MCF 10A (cell line): ENCODE measurements at regions of chr18 and their contacts with region 1.

Region 1: GRCh38 chr18:62982600-62983251 is 267.4 kb downstream of the PHLPP1 start:
- DNase-seq: peak; percentile 71
- H3K4me3 Mint-ChIP-seq: no peak overlapping the region
- H3K27ac Mint-ChIP-seq: no peak overlapping the region
- H3K4me1 Mint-ChIP-seq: peaks cover 6% of the 10 kb centered on the region
- H3K27me3 Mint-ChIP-seq: no peaks in the 10 kb centered on the region
- CTCF ChIP-seq: peak; percentile 73

Region 2: DNA sequence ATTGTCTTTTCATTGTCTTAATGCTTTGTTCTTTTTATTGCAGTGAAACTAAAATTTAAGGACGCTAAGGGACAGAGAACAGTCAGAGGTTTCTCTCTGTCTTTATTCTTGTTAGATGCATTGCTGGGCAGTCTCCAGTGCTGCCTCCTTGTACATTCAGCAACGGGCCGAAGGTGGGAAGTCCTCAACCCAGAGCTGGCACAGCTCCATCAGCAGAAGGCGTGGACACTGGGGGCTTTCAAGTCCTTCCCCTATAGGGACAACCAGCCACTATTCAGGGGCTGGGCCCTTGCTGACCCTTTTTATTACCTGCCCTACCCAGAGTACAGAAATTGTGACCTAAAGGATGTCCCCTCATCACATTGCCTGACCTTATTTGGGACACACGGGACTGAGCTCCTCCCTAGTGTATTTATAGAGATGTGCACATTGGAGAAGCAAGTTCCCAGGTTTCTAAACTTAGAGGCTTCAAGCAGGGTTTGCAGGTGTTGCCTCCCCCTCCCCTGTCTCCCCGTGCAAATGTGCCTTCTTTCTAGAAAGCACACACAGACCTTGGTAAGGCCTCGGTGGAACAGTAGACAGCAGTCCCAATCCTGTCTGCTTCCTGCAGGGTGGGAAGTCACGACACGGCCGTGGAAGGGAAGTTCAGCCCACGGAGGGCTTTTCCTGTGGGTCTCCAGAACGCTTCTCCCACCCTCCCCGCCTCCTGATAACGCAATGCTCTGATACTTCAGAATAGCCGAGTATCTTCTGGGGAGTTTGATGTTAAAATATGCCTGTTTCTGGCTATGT is 391.7 kb before region 1 on chr18:
- CTCF ChIA-PET with region 1: interaction called, 72 read pairs
- POLR2A ChIA-PET with region 1: interaction called, 4 read pairs
- intact Hi-C with region 1: loop called (anchors 1 kb)
- DNase-seq: no peak
- H3K4me3 Mint-ChIP-seq: no peak overlapping the region
- H3K27ac Mint-ChIP-seq: no peak overlapping the region
- H3K4me1 Mint-ChIP-seq: no peaks in the 10 kb centered on the region
- H3K27me3 Mint-ChIP-seq: no peaks in the 10 kb centered on the region
- CTCF ChIP-seq: no peak

Region 3: GRCh38 chr18:62992967-62993366 is 10.2 kb after region 1 on chr18:
- CTCF ChIA-PET with region 1: interaction called, 14 read pairs
- POLR2A ChIA-PET with region 1: no interaction called
- intact Hi-C with region 1: no loop called
- DNase-seq: no peak
- H3K4me3 Mint-ChIP-seq: no peak overlapping the region
- H3K27ac Mint-ChIP-seq: no peak overlapping the region
- H3K4me1 Mint-ChIP-seq: peaks cover 6% of the 10 kb centered on the region
- H3K27me3 Mint-ChIP-seq: peaks cover 21% of the 10 kb centered on the region
- CTCF ChIP-seq: no peak

Region 4: DNA sequence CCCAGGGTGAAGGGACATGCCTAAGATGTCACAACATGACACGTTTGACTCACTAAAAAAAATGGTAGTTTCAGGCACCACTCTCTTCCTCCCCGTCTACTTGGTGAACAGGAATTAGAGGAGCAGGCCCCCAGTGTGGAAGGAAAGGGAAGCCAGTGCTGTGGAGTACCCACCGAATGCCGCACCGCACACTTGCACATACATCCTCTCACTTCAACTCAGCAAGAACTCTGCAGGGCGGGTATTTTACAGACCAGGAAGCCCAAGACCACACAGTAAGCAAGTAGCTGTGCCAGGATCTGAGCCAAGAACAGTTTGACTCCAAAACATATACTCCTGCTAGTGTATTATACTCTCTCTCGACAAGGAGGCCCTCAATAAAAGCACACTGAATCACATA is 267.0 kb after region 1 on chr18:
- CTCF ChIA-PET with region 1: no interaction called
- POLR2A ChIA-PET with region 1: no interaction called
- intact Hi-C with region 1: no loop called
- DNase-seq: no peak
- H3K4me3 Mint-ChIP-seq: no peak overlapping the region
- H3K27ac Mint-ChIP-seq: no peak overlapping the region
- H3K4me1 Mint-ChIP-seq: no peaks in the 10 kb centered on the region
- H3K27me3 Mint-ChIP-seq: no peaks in the 10 kb centered on the region
- CTCF ChIP-seq: no peak